ENCODE measurements at regions of chr11 and their contacts with region 1.

Region 1: GRCh38 chr11:6719576-6719975 is 36.4 kb upstream of the MRPL17 start:
- DNase-seq: no peak
- ATAC-seq: no peak
- H3K4me3 ChIP-seq: no peak overlapping the region
- H3K4me3 Mint-ChIP-seq: no peak overlapping the region
- H3K27ac ChIP-seq: no peak overlapping the region
- H3K27ac Mint-ChIP-seq: peak overlapping the region; percentile 76
- H3K4me1 ChIP-seq: peaks cover 49% of the 10 kb centered on the region
- H3K4me1 Mint-ChIP-seq: peaks cover 91% of the 10 kb centered on the region
- H3K27me3 ChIP-seq: no peaks in the 10 kb centered on the region
- H3K27me3 Mint-ChIP-seq: no peaks in the 10 kb centered on the region
- CTCF ChIP-seq: no peak

Region 2: GRCh38 chr11:6377902-6378639 is 341.5 kb before region 1 on chr11:
- CTCF ChIA-PET with region 1: no interaction called
- POLR2A ChIA-PET with region 1: no interaction called
- intact Hi-C with region 1: no loop called
- DNase-seq: peak in 1 of 9 experiments; percentile 45
- ATAC-seq: peak; percentile 81
- H3K4me3 ChIP-seq: peak overlapping the region in 1 of 2 experiments; percentile 17
- H3K4me3 Mint-ChIP-seq: peak overlapping the region; percentile 58
- H3K27ac ChIP-seq: peak overlapping the region in 1 of 2 experiments; percentile 7
- H3K27ac Mint-ChIP-seq: peak overlapping the region; percentile 86
- H3K4me1 ChIP-seq: peaks cover 18% of the 10 kb centered on the region
- H3K4me1 Mint-ChIP-seq: peaks cover 28% of the 10 kb centered on the region
- H3K27me3 ChIP-seq: no peaks in the 10 kb centered on the region
- H3K27me3 Mint-ChIP-seq: no peaks in the 10 kb centered on the region
- CTCF ChIP-seq: no peak

Region 3: GRCh38 chr11:6737872-6738466 is 18.4 kb after region 1 on chr11:
- CTCF ChIA-PET with region 1: interaction called, 60 read pairs
- POLR2A ChIA-PET with region 1: interaction called, 3 read pairs
- intact Hi-C with region 1: no loop called
- DNase-seq: peak; percentile 44 to 87 (median 69)
- ATAC-seq: peak; percentile 54
- H3K4me3 ChIP-seq: no peak overlapping the region
- H3K4me3 Mint-ChIP-seq: peak overlapping the region; percentile 9
- H3K27ac ChIP-seq: peak overlapping the region; percentile 1 to 8
- H3K27ac Mint-ChIP-seq: peak overlapping the region; percentile 87
- H3K4me1 ChIP-seq: peaks cover 91% of the 10 kb centered on the region
- H3K4me1 Mint-ChIP-seq: peaks cover 91% of the 10 kb centered on the region
- H3K27me3 ChIP-seq: no peaks in the 10 kb centered on the region
- H3K27me3 Mint-ChIP-seq: no peaks in the 10 kb centered on the region
- CTCF ChIP-seq: peak; percentile 59